Panc1 (cell line): ENCODE measurements at regions of chr11 and their contacts with region 1.

Region 1: DNA sequence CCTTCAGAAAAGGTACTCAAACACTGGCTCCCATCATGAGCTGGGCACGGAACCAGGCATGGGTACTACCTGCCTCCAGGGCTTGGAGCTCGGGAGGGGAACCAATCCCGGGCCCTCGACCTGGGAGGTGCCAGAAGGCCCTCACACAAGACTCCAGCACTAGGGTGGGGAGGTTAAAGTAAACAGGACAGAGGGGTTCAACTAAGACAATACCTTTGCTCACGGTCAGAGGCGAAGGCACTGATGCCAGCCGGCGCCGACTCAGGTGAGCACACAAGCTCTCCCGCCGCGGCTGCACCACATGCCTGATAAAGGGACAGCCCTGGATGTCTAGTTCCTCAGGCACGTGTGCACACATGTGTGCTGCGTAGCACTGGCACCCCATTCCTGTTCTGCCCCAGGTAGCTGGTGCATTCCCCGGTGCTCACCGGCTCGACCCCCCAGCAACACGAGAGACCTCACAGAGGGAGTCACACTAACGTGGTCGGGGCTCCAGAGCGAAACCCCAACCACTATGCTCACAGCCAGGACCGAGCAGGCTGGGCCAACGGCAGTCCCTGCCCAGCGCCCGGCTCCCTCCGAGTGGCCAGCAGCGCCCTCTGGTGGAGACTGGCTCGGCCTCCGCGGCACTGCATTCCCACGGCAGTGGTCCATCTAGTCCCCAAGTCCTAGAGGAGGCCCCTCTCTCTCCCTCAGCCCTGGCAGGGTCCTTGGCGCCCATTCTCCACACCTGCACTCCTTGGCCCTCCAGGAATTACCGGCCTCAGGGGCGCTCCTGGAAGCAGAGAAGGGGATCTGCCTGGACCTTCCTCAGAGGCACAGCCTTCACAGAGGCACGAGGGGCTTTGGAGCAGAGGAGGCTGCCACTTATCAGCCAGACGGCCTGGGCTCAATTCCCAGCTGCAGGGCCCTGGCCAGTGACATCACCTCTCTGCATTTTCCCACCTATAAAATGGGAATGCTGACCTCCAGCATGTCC is 28.8 kb upstream of the MOB2 start:
- DNase-seq: peak; percentile 22
- ATAC-seq: peak; percentile 91
- H3K4me3 ChIP-seq: no peak overlapping the region
- H3K27ac ChIP-seq: peak overlapping the region; percentile 10; the same call in 1 of the 2 replicates
- H3K4me1 ChIP-seq: peaks cover 37% of the 10 kb centered on the region
- H3K27me3 ChIP-seq: no peaks in the 10 kb centered on the region
- CTCF ChIP-seq: peak; percentile 100

Region 2: GRCh38 chr11:1202776-1203504 is 312.4 kb before region 1 on chr11:
- CTCF ChIA-PET with region 1: no interaction called
- POLR2A ChIA-PET with region 1: no interaction called
- in situ Hi-C with region 1: no loop called
- intact Hi-C with region 1: loop called (anchors 10 kb)
- DNase-seq: peak; percentile 32
- ATAC-seq: peak; percentile 87
- H3K4me3 ChIP-seq: 0 out of 4 replicates have a peak overlapping the region, but pooled peaks of 1 of the 2 experiments have one; percentile 3
- H3K27ac ChIP-seq: peak overlapping the region; percentile 32
- H3K4me1 ChIP-seq: peaks cover 18% of the 10 kb centered on the region
- H3K27me3 ChIP-seq: no peaks in the 10 kb centered on the region
- CTCF ChIP-seq: peak; percentile 100

Region 3: DNA sequence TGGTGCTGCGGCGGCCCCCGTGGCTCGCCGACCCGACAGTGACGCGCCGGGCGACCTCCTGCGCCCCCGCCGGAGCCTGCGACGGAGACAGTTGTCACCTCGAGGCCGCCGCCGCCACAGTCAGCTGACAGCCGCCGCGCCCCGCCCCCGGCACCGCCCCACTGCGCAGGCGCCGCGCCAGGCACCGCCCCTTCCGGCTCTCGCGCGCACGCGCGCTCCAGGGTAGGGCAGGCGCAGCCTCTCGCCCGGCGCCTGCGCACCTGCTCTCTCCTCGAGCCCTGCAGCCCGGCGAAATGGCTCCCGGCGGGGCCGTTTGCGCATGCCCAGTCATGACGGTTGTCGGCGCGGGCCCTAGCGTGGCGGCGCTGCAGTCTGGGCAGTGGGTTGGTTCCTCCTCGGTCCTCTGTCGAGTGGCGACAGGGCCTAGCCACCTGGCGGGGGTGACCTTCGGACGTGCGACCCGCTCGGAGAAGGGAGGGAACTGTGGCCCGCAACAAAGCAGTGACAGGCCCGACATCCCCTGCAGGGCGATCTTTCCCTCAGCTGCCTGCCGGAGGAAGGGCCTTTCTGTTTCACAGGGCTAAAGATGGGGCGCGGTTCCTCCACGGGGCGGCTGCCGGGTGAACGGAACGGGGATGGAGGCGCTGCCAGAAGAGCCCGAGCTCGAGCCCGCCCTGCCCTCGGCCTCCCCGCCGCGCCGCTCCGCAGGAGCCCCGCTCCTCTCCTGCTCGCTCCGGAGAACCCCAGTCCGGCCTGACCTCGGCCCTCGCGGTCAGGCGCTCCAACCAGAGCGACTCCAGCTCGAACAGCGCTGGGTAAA is 205.7 kb before region 1 on chr11 and contains the start of gene TOLLIP:
- CTCF ChIA-PET with region 1: no interaction called
- POLR2A ChIA-PET with region 1: no interaction called
- in situ Hi-C with region 1: no loop called
- intact Hi-C with region 1: loop called (anchors 10 kb)
- DNase-seq: peak; percentile 64
- ATAC-seq: peak; percentile 96
- H3K4me3 ChIP-seq: peak within 1 kb of the TSS; percentile 66 to 76
- H3K27ac ChIP-seq: peak within 1 kb of the TSS; percentile 95
- H3K4me1 ChIP-seq: peaks cover 22% of the 10 kb centered on the region
- H3K27me3 ChIP-seq: no peaks in the 10 kb centered on the region
- CTCF ChIP-seq: peak; percentile 67; the same call in 1 of the 2 replicates
- total RNA-seq, gene TOLLIP: 141 TPM

Region 4: DNA sequence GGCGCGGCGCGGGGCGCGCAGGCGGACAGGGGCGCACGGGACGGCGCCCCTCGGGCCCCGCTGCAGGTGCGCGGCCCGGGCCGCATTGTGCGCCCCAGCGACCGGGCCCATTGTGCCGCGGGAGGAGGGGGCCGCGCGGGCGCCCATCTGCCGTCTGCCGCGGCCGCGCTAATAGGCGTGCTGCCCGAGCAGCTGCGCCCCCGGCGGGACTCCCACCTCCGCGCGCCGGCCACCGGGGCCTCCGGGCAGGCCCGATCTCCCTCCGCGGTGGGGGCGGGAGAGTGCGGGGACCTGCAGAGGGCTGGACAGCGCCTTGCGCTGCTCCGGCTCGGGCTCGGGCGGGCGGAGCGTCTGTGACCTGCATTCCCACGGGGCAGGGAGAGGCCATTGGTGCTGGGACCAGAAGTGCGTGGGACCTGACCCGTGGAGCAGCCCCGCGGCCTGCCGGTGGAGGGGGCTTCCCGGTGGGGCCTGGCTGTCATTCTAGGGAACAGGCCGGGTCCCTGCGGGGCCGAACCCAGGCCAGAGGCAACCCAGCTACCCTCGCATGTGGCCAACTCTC is 124.7 kb before region 1 on chr11:
- CTCF ChIA-PET with region 1: no interaction called
- POLR2A ChIA-PET with region 1: no interaction called
- in situ Hi-C with region 1: no loop called
- intact Hi-C with region 1: no loop called
- DNase-seq: no peak
- ATAC-seq: peak; percentile 16; the same call in 1 of the 2 replicates
- H3K4me3 ChIP-seq: peak overlapping the region; percentile 46 to 56
- H3K27ac ChIP-seq: peak overlapping the region; percentile 48; the same call in 1 of the 2 replicates
- H3K4me1 ChIP-seq: peaks cover 16% of the 10 kb centered on the region
- H3K27me3 ChIP-seq: no peaks in the 10 kb centered on the region
- CTCF ChIP-seq: no peak